ENCODE measurements at regions of chr10 and their contacts with region 1.

Region 1: DNA sequence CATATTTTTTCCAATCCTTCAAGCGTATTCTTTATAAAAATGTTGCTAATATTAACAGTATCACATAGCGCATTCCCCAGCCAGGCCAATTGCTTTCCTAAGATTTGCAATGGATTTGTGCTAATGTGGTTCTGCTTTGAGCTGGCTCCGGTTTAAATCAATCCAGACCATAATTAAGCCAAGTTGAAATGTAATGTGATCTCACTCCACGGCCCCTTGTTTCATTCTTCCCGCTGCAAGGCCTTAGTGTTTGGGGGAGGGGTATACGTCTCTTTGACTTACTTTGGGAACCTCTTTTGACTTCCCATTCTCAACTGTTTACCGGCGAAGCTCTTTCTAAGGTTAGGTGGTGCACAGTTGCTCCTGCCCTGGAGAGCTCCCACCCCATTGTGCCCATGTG is 86.4 kb downstream of the PRPF18 start:
- DNase-seq: no peak
- H3K4me3 ChIP-seq: no peak overlapping the region
- H3K27ac ChIP-seq: no peak overlapping the region
- H3K4me1 ChIP-seq: no peaks in the 10 kb centered on the region
- H3K27me3 ChIP-seq: no peaks in the 10 kb centered on the region
- CTCF ChIP-seq: no peak

Region 2: DNA sequence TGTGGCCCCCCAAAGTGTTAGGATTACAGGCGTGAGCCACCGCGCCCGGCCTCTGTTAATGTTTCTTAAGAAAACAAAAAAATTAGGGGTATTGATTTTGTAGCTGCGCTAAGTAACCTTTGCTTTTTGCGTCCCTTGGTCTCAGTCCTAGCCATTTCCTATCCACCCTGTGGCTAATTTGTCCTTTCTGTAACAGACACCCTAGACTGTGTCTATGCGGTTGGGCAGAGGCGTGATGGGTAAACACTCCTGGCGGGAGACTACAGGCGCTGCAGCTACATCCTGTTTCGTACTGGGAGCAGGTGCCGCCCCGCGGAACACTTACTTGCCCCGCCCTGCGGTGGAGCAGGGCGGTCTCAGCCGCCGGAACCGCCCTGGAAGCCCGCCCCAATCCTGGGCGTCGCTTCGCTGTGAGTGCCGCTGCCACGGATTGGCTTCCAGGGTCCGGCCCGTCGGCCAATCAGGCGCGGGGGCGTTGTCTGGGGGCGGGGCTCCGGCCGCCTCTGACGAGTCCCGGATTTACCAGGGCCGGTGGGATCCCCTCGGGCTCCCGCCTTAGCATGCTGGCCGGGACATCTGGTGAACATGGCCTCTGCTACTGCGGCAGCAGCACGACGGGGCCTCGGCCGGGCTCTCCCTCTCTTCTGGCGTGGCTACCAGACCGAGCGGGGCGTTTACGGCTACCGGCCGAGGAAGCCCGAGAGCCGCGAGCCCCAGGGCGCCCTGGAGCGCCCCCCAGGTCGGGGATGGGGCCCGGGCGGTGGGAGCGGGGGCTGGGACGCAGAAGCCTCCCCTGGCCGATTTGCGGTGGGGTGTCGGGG is 1604.5 kb before region 1 on chr10 and contains the start of gene DHTKD1:
- CTCF ChIA-PET with region 1: no interaction called
- POLR2A ChIA-PET with region 1: no interaction called
- intact Hi-C with region 1: no loop called
- DNase-seq: peak; percentile 88 to 98
- H3K4me3 ChIP-seq: peak within 1 kb of the TSS; percentile 83
- H3K27ac ChIP-seq: peak within 1 kb of the TSS; percentile 10; the same call in 1 of the 2 replicates
- H3K4me1 ChIP-seq: no peaks in the 10 kb centered on the region
- H3K27me3 ChIP-seq: no peaks in the 10 kb centered on the region
- CTCF ChIP-seq: no peak; the same call in 1 of the 2 replicates
- total RNA-seq, gene DHTKD1: 41.1 and 43.8 TPM in 2 replicates

Region 3: GRCh38 chr10:13536674-13537366 is 136.3 kb before region 1 on chr10:
- CTCF ChIA-PET with region 1: interaction called, 10 read pairs
- POLR2A ChIA-PET with region 1: no interaction called
- intact Hi-C with region 1: no loop called
- DNase-seq: peak in 1 of 2 experiments; percentile 28
- H3K4me3 ChIP-seq: no peak overlapping the region
- H3K27ac ChIP-seq: no peak overlapping the region
- H3K4me1 ChIP-seq: no peaks in the 10 kb centered on the region
- H3K27me3 ChIP-seq: peaks cover 86% of the 10 kb centered on the region
- CTCF ChIP-seq: peak; percentile 47; the same call in 1 of the 2 replicates

Region 4: DNA sequence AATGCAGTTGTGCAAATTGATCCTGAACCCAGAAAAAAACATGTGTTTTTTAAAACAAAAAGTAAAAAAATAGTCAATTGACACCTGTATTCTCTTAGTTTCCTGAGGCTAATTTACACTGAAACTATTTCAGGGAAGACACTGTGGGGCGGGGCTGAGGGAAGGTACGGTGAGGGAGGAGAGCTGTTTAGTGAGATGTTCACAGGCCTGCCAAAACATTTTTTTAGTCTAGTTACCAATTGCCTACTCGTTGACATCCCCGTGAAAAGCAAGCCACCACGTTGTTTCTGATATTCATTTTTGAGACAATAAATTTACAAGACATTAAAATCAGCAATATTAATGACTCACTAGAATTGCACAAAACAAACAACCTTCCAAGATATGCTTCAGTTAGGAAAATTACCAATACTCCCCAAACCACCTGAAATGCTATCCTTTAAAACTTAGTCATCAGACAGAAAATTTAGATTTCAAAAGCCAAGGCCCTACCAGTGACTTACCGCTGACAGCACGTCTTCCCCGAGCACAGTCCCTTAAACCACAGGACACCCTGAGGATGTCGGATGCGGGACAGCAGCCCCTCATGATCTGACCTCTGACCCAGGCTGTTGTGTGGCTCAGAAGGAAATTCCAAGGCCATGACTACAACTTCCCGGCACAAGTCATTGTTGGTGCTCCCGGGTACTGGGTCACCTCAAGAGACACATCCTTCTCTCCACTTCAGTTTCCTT is 192.8 kb after region 1 on chr10:
- CTCF ChIA-PET with region 1: no interaction called
- POLR2A ChIA-PET with region 1: no interaction called
- intact Hi-C with region 1: no loop called
- DNase-seq: peak; percentile 68 to 92
- H3K4me3 ChIP-seq: peak overlapping the region; percentile 35; the same call in 1 of the 2 replicates
- H3K27ac ChIP-seq: peak overlapping the region; percentile 93
- H3K4me1 ChIP-seq: peaks cover 30% of the 10 kb centered on the region
- H3K27me3 ChIP-seq: no peaks in the 10 kb centered on the region
- CTCF ChIP-seq: no peak